ENCODE measurements at regions of chr12 and their contacts with region 1.

Region 1: GRCh38 chr12:93569656-93570551 is 2.6 kb upstream of the SOCS2 start:
- DNase-seq: peak; percentile 88
- ATAC-seq: peak; percentile 82

Region 2: DNA sequence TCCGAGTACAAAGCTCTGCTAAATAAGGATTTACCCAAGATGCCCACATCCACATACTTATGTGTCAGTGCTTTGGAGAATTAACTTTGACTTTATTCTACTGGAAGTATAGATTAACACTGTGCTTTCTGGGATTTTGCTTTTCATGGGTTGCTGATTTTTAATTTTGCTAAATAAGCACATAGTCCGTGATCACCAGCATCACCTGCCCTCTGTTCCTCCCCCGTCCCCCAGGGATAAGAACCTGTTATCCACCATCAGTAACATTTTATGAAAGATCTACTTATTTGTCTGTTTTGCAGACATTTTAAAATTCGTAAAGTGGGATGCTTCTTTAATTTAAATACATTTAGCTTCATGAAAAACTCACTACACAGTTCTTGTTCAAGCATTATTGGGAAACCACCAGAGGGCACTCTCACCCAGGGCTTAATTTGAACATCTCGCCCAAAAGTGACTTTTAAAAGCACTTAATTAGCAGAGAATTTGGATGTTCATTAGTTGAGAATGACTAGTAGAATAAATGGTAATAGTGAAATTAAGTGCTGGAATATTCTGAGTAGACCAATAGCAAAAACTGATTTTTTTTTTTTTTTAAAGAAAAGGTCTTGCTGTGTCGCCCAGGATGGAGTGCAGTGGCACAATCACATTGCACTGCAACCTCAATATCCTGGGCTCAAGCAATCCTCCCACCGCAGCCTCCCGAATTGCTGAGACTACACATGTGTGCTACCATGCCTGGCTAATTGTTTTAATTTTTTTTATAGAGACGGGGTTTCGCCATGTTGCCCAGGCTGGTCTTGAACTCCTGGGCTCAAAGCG is 66.9 kb before region 1 on chr12:
- intact Hi-C with region 1: loop called (anchors 5 kb)
- DNase-seq: no peak
- ATAC-seq: no peak

Region 3: GRCh38 chr12:93677195-93678064 is 107.5 kb after region 1 on chr12 and contains the start of gene CRADD:
- intact Hi-C with region 1: loop called (anchors 1 kb)
- DNase-seq: peak; percentile 85
- ATAC-seq: peak; percentile 94
- total RNA-seq, gene CRADD: 40.3 TPM

Region 4: GRCh38 chr12:93766796-93767523 is 197.1 kb after region 1 on chr12:
- intact Hi-C with region 1: loop called (anchors 5 kb)
- DNase-seq: no peak
- ATAC-seq: peak; percentile 79

Region 5: GRCh38 chr12:93832131-93832530 is 262.2 kb after region 1 on chr12:
- intact Hi-C with region 1: loop called (anchors 5 kb)
- DNase-seq: no peak
- ATAC-seq: no peak

Region 6: DNA sequence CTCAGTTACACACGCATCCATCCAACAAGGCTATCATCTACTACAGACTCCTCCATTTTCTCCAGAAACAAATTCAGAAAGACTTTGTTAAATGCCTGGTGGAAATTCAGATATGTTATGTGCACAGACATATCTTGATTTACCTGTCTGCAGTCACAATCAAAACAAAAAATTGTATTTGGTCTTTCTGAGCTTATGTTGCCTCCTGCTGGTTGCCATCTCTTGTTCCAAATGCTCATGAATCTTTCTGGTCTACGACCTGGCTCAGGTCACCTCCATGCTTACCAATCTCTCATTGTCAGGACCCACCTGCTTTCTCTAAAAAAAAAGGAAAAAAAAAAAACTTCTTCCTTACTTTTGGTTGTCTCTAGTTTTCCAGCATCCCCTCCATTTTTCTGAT is 409.3 kb after region 1 on chr12:
- intact Hi-C with region 1: loop called (anchors 2 kb)
- DNase-seq: no peak
- ATAC-seq: no peak

Region 7: GRCh38 chr12:94074980-94075928 is 505.4 kb after region 1 on chr12:
- intact Hi-C with region 1: loop called (anchors 10 kb)
- DNase-seq: peak; percentile 81
- ATAC-seq: peak; percentile 92